H1 (cell line): ENCODE measurements at regions of chr4 and their contacts with region 1.

Region 1: GRCh38 chr4:78592104-78592783 is 40.7 kb downstream of the ANXA3 start:
- DNase-seq: no peak
- H3K4me3 ChIP-seq: no peak overlapping the region
- H3K27ac ChIP-seq: no peak overlapping the region
- H3K4me1 ChIP-seq: peaks cover 0 to 4% (median 0%) of the 10 kb centered on the region in 4 experiments; a peak in 1 of 7 replicates
- H3K27me3 ChIP-seq: no peaks in the 10 kb centered on the region
- CTCF ChIP-seq: peak in 2 of 3 experiments; percentile 65 to 75; a peak in 3 of 4 replicates
- EP300 ChIP-seq: no peak
- POLR2A ChIP-seq: no peak
- RAD21 ChIP-seq: peak; percentile 56 to 68

Region 2: GRCh38 chr4:78581618-78582017 is 10.6 kb before region 1 on chr4:
- CTCF ChIA-PET with region 1: interaction called, 37 read pairs
- POLR2A ChIA-PET with region 1: interaction called, 4 read pairs
- DNase-seq: no peak
- H3K4me3 ChIP-seq: no peak overlapping the region
- H3K27ac ChIP-seq: no peak overlapping the region
- H3K4me1 ChIP-seq: peaks cover 0 to 4% (median 0%) of the 10 kb centered on the region in 4 experiments; a peak in 1 of 7 replicates
- H3K27me3 ChIP-seq: no peaks in the 10 kb centered on the region
- CTCF ChIP-seq: no peak
- EP300 ChIP-seq: no peak
- POLR2A ChIP-seq: no peak
- RAD21 ChIP-seq: no peak

Region 3: GRCh38 chr4:78606530-78607095 is 14.4 kb after region 1 on chr4:
- CTCF ChIA-PET with region 1: interaction called, 32 read pairs
- POLR2A ChIA-PET with region 1: no interaction called
- DNase-seq: no peak
- H3K4me3 ChIP-seq: no peak overlapping the region
- H3K27ac ChIP-seq: no peak overlapping the region
- H3K4me1 ChIP-seq: no peaks in the 10 kb centered on the region
- H3K27me3 ChIP-seq: no peaks in the 10 kb centered on the region
- CTCF ChIP-seq: no peak
- EP300 ChIP-seq: no peak
- POLR2A ChIP-seq: no peak
- RAD21 ChIP-seq: no peak

Region 4: GRCh38 chr4:78766026-78766425 is 173.8 kb after region 1 on chr4:
- CTCF ChIA-PET with region 1: no interaction called
- POLR2A ChIA-PET with region 1: no interaction called
- DNase-seq: no peak
- H3K4me3 ChIP-seq: no peak overlapping the region
- H3K27ac ChIP-seq: no peak overlapping the region
- H3K4me1 ChIP-seq: no peaks in the 10 kb centered on the region
- H3K27me3 ChIP-seq: no peaks in the 10 kb centered on the region
- CTCF ChIP-seq: no peak
- EP300 ChIP-seq: no peak
- POLR2A ChIP-seq: no peak
- RAD21 ChIP-seq: no peak